Activated naive CD8-positive, alpha-beta T cell treated with anti-CD3 and anti-CD28 coated beads, Interleukin-2, amount 10 ng/mL, durations not matched to agents 7 days and 5 days (primary cell): ENCODE measurements at regions of chr2 and their contacts with region 1.

Region 1: DNA sequence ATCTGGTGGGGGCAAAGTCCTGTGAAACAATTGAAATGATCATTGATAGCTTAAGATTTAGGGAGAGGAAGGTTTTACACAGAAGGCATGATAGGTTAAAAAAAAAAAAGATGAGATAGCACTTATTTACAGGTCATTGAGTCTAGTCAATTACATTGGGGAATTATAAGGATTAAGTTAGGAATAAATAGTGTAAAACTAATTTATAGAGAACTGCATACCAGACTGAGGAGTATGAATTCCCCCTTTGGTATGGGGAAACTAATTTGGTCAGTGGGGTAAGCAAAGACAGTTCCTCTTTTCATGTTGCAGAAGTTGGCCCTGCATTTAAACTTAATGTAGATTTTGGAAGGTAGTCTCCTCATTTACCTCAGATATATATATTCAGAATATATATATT is 10.8 kb downstream of the GLS start:
- DNase-seq: no peak
- ATAC-seq: no peak
- H3K4me3 Mint-ChIP-seq: no peak overlapping the region
- H3K27ac Mint-ChIP-seq: no peak overlapping the region
- H3K4me1 Mint-ChIP-seq: peaks cover 41% of the 10 kb centered on the region
- H3K27me3 Mint-ChIP-seq: no peaks in the 10 kb centered on the region

Region 2: DNA sequence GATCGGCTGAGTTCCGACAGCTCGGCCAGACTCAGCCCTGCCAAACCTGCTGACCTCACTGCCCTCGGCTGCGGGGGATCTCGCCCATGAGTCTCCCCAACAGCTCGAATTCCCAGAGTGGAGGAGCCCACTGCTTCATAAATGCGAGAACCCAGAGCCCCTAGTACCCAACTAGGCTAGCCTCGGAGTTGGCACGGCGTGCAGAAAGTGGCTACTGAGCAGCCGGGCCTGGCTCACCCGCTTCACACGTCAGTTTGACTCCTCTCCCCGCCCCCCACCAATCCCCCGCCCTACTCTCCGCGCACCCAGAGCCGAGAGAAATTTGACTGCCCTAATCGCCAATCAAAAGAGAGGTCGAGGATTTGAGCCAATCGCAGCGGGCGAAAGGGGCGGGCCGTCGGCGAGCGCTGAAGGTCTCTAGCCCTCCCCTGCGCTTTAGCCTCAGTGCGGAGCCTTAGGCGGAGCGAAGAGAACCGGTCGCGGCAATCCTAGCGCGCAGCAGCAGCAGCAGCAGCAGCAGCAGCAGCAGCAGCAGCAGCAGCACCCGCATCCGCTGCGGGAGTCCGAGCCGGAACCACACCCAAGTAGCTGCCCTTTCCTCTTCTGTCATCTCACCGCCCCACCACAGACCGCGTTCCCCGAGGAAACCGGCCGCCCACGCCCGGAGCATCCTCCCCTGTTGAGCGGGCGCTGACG is 10.8 kb before region 1 on chr2 and contains the start of gene GLS:
- POLR2A ChIA-PET with region 1: interaction called, 36 read pairs
- DNase-seq: peak; percentile 94
- ATAC-seq: peak; percentile 80
- H3K4me3 Mint-ChIP-seq: peak within 1 kb of the TSS; percentile 100
- H3K27ac Mint-ChIP-seq: peak within 1 kb of the TSS; percentile 100
- H3K4me1 Mint-ChIP-seq: peaks cover 39% of the 10 kb centered on the region
- H3K27me3 Mint-ChIP-seq: no peaks in the 10 kb centered on the region
- total RNA-seq, gene GLS: 175 to 187 TPM

Region 3: DNA sequence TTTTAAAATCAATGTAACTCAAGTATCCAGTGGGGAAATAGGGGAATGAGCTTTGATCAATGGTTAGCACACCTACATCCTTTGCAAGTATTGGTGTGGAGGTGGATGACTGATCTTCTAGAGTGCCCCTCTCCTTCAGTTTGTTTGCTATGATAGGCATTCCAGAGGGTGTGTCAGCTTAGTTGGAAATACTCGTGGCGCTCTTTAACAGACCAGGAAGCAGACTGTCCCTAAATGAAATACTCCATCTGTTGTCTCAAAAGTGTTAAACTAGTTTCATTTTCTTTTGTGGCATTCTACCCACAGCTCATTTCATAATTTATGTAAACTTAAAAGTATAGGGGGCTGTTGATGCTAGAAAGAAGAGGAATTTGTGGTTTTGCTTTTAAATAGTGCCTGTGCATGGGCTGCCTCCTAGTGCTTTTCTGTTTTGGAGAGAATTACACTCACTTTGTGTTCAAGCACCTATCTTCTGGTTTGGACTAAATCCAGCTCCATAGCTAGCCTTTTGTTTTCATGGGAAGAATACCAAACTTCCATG is 56.4 kb after region 1 on chr2:
- POLR2A ChIA-PET with region 1: no interaction called
- DNase-seq: no peak
- ATAC-seq: peak; percentile 67
- H3K4me3 Mint-ChIP-seq: peak overlapping the region; percentile 51
- H3K27ac Mint-ChIP-seq: peak overlapping the region; percentile 7
- H3K4me1 Mint-ChIP-seq: peaks cover 8% of the 10 kb centered on the region
- H3K27me3 Mint-ChIP-seq: no peaks in the 10 kb centered on the region